ENCODE measurements at regions of chrX and their contacts with region 1.

Region 1: DNA sequence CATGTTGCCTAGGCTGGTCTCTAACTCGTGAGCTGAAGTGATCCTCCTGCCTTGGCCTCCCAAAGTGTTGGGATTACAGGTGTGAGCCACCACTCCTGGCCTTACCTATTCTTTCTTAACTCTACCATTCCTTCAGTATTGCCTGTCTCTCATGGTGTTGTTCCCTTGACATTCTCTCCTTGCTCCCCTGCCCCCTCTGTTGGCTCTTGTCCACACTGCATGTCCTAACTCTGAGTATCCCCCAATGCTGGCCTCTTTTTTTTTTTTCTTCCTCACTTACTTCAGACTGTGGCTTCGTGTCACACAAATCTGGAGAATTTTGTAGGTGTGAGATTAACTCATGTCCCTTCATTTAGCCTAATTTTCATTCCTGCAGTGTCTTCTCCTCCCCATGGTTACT is 22.9 kb upstream of the FRMPD4 start:
- DNase-seq: peak in 1 of 2 experiments; percentile 26
- H3K4me3 ChIP-seq: no peak overlapping the region
- H3K4me3 Mint-ChIP-seq: no peak overlapping the region
- H3K27ac Mint-ChIP-seq: no peak overlapping the region
- H3K4me1 ChIP-seq: no peaks in the 10 kb centered on the region
- H3K4me1 Mint-ChIP-seq: no peaks in the 10 kb centered on the region
- H3K27me3 ChIP-seq: no peaks in the 10 kb centered on the region
- H3K27me3 Mint-ChIP-seq: peaks cover 7% of the 10 kb centered on the region
- CTCF ChIP-seq: peak; percentile 25 to 30

Region 2: DNA sequence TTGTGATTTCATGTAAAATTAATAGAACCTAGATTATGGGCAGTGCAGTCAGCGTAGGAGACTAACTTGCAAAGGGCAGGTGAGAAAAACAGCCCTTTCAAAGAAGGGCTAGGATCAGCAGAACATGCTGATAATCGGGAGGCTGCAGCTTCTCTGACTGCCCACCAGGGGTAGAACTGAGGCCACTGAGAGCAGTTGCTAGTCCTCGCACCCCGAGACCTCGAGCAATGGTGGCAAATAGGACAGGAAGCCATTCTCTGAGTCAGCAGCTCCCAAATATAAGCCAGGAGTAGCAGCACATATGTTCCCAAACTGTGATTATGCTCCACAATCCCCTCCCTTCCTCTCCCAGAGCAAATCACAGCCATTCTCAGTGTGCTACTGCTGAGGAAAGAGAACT is 170.9 kb before region 1 on chrX:
- CTCF ChIA-PET with region 1: no interaction called
- POLR2A ChIA-PET with region 1: no interaction called
- intact Hi-C with region 1: loop called (anchors 10 kb)
- DNase-seq: peak; percentile 33 to 39
- H3K4me3 ChIP-seq: no peak overlapping the region
- H3K4me3 Mint-ChIP-seq: no peak overlapping the region
- H3K27ac Mint-ChIP-seq: no peak overlapping the region
- H3K4me1 ChIP-seq: no peaks in the 10 kb centered on the region
- H3K4me1 Mint-ChIP-seq: no peaks in the 10 kb centered on the region
- H3K27me3 ChIP-seq: no peaks in the 10 kb centered on the region
- H3K27me3 Mint-ChIP-seq: no peaks in the 10 kb centered on the region
- CTCF ChIP-seq: peak; percentile 23 to 30

Measured in Caco-2 (cell line).